Body of pancreas (tissue), 4 donors: ENCODE measurements at regions of chr7 and their contacts with region 1.

Region 1: DNA sequence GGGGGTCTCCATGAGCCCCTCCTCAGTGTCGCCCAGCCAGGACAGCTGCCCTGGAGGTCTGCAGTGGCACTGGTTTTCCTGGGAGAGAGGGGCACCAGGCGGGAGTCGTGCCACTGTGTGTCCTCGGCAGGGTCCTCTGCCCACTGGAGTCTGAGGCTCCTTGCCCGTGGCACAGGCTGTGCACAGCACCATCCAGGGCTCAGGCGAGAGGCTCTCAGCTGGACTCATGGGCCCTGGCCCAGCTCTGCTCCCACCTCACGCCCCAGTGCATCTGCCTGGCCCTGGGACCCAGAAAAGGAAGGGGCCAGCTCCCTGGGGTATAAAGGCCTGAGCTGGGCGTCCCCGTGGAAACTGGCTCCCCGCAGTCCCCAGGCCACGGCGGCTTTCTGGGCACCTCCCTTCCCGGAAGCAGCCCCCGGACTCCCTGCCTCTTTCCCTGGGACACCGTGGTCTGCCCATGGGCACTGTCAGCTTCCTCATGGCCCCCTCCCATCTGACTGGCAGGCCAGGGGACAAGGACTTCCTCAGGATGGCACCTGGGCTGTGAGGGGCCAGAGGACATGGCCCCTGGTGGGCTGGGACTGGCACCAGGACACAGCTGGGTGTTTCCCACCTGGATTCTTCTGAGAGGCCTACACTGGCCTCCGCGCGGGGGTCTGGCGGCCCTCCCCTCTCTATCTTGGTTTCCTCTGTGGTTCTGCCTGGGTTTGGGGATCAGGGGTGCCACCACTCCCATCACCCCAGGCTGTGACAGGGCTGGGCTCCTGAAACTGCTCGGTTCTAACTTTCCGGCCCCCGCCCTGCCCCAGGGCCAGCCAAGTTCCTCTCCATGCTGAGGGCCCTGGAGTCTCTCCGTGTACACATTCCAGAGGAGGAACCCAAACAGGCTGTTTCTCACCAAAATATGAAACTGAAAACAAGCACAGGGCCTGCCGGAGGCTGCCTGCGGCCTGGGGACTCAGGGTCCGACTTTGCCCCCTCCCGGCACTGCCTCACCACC is 5.5 kb downstream of the FOXL3 start:
- DNase-seq: no peak
- ATAC-seq: no peak
- H3K4me3 ChIP-seq: no peak overlapping the region
- H3K27ac ChIP-seq: no peak overlapping the region
- H3K4me1 ChIP-seq: peaks cover 5% of the 10 kb centered on the region
- H3K27me3 ChIP-seq: peaks cover 0 to 18% of the 10 kb centered on the region in 2 donors
- CTCF ChIP-seq: no peak
- POLR2A ChIP-seq: no peak

Region 2: GRCh38 chr7:341841-342638 is 46.6 kb after region 1 on chr7:
- intact Hi-C with region 1: no loop called
- DNase-seq: peak; percentile 97 to 99 (median 99)
- ATAC-seq: peak; percentile 90
- H3K4me3 ChIP-seq: no peak overlapping the region
- H3K27ac ChIP-seq: peak overlapping the region; percentile 92 to 98 (median 94)
- H3K4me1 ChIP-seq: peaks cover 64% of the 10 kb centered on the region
- H3K27me3 ChIP-seq: no peaks in the 10 kb centered on the region
- CTCF ChIP-seq: peak in 5 of 7 experiments; percentile 8 to 64 (median 55)
- POLR2A ChIP-seq: peak; percentile 44 to 81 (median 71)

Region 3: GRCh38 chr7:353746-354325 is 58.4 kb after region 1 on chr7:
- intact Hi-C with region 1: loop called (anchors 10 kb)
- DNase-seq: no peak
- ATAC-seq: peak; percentile 33
- H3K4me3 ChIP-seq: no peak overlapping the region
- H3K27ac ChIP-seq: no peak overlapping the region
- H3K4me1 ChIP-seq: peaks cover 10% of the 10 kb centered on the region
- H3K27me3 ChIP-seq: no peaks in the 10 kb centered on the region
- CTCF ChIP-seq: no peak
- POLR2A ChIP-seq: no peak

Region 4: DNA sequence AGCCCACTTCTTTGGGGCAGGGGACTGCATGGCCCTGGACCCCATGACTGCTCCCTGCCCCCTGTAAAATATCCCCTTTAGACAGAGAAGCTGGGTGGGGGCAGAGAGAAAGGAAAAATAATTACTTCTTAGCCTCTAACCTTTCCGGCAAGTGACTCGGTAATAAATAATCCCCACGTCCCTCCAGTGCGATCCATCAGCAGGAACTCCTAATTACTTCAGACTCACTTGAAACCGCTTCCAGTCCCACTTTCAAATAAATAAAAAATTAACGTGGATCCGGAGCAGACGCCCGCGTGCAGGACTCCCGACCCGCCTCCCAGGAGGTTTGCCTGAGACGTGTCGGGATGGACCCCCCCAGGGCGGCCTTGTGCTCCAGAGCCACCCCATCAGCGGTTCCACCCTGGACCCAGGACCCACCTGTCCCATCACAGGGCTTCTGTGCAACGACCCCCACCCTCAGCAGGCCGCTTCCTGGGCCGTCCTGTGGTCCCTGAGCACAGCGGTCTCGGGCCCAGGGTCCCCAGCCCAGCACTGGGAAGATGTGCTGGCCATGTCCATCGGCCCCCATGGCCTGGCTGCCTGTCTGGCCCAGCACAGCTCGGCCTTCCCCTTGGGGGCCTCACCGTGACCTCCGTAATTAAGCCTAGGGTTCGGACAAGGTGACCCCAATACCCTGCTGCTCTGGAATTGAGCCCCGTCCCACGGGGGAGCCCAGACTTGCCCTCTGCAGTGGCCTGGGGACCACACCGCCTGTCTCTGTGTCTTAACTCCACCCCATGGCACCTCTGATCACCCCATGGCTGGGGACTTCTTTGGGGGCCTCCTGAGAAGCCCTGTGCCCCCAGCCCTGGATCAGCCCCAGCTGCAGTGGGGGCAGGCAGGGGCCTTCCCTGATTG is 1045.3 kb after region 1 on chr7:
- intact Hi-C with region 1: no loop called
- DNase-seq: no peak
- ATAC-seq: no peak
- H3K4me3 ChIP-seq: no peak overlapping the region
- H3K27ac ChIP-seq: no peak overlapping the region
- H3K4me1 ChIP-seq: no peaks in the 10 kb centered on the region
- H3K27me3 ChIP-seq: no peaks in the 10 kb centered on the region
- CTCF ChIP-seq: no peak
- POLR2A ChIP-seq: no peak